ENCODE measurements at regions of chr12 and their contacts with region 1.

Region 1: DNA sequence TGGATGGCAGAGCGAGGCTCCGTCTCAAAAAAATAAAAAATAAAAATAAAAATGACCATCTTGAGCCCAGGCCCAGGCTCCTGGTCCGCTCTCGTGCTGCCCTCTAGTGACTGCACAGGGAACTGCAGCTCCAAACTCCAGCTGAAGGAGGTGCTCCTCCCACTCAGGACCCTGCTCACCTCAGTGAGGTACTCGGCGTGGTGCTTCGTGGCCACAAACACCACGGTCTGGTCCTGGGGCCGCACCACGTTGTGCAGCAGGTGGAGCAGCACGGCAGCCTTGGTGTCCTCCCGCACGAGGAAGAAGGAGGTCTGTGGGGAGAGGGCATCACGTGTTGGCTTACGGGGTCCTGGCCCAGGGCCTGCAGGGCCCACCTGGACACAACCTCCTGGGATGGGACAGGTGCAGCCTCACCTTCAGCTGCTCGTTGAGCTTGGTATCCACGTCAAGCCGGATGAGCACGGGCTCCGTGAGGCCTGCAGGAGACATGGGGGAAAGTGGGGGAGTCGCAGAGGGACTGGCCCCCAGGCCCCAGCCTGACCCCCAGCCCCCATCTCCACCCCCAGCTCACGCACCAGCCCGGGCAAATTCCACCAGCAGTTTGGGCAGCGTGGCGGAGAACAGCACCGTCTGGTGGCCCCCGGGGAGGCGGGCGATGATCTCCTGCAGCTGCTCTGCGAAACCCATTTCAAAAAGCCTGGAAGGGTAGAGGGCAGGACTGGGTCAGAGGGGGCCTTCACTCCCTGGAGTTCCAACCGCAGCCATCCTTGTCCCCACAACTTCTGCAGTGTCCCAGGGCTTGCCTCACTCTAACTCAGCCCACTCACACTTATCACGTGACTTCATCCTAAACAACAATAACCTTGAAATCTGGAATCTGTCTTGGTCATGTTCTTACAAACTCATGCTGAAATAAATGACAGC is 10.6 kb downstream of the DDX54 start:
- DNase-seq: peak; percentile 56 to 79 (median 69)
- H3K4me3 ChIP-seq: no peak overlapping the region
- H3K27ac ChIP-seq: no peak overlapping the region
- H3K4me1 ChIP-seq: no peaks in the 10 kb centered on the region
- H3K27me3 ChIP-seq: no peaks in the 10 kb centered on the region

Region 2: GRCh38 chr12:112992541-112993398 is 182.0 kb before region 1 on chr12:
- CTCF ChIA-PET with region 1: interaction called, 21 read pairs
- POLR2A ChIA-PET with region 1: no interaction called
- DNase-seq: peak; percentile 62 to 86 (median 79)
- H3K4me3 ChIP-seq: no peak overlapping the region
- H3K27ac ChIP-seq: no peak overlapping the region
- H3K4me1 ChIP-seq: peaks cover 0 to 11% (median 4%) of the 10 kb centered on the region in 4 experiments
- H3K27me3 ChIP-seq: no peaks in the 10 kb centered on the region

Region 3: GRCh38 chr12:113098446-113098896 is 76.3 kb before region 1 on chr12:
- CTCF ChIA-PET with region 1: interaction called, 18 read pairs
- POLR2A ChIA-PET with region 1: no interaction called
- DNase-seq: peak; percentile 72 to 79 (median 79)
- H3K4me3 ChIP-seq: no peak overlapping the region
- H3K27ac ChIP-seq: no peak overlapping the region
- H3K4me1 ChIP-seq: peaks cover 0 to 6% (median under 1%) of the 10 kb centered on the region in 4 experiments
- H3K27me3 ChIP-seq: peaks cover 0 to under 1% (median 0%) of the 10 kb centered on the region in 5 experiments

Region 4: DNA sequence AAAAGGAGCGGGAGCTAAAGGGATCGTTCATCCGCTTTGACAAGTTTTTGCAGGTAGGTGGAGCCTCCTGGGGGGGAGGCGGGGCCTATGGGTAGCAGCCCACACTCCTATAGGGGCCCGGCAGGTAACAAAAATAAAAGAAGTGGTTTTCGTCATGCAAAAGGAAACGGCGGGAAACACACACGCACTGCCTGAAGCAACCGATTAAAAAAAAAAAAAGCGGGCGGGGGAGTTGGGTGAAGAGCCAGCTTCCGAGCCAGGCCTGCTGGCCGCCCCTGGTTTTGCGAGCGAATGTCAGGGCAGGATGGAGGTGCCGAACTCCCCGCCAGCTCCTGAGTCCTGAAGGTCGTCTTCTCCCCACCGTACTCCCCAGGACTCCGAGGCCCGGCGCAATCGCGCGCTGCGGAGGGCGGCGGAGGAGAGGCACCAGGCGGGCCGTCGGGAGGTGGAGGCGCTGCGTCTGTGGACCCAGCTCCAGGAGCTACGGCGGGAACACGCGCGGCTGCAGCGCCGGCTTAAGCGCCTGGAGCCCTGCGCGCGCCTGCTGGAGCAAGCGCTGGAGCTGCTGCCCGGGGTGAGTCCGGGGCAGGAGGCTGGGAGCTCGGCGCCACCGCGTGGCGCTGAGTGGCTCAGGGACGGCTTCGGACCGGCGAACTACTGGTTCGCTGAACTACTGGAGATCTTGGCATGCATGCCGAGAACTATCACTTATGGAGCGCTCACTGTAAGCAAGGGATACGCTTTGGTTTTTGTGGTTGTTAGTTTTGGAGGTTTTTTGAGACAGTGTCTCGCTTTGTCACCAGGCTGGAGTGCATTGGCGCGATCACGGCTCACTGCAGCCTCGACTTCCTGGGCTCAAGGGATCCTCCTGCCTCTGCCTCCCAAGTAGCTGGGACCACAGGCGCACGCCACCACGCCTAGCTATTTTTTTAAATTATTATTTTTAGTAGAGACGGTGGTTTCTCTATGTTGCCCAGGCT is 21.6 kb before region 1 on chr12:
- CTCF ChIA-PET with region 1: interaction called, 97 read pairs
- POLR2A ChIA-PET with region 1: no interaction called
- DNase-seq: peak; percentile 74 to 88 (median 87)
- H3K4me3 ChIP-seq: peak overlapping the region; percentile 23 to 67 (median 61)
- H3K27ac ChIP-seq: no peak overlapping the region
- H3K4me1 ChIP-seq: peaks cover 0 to 51% (median 45%) of the 10 kb centered on the region in 4 experiments
- H3K27me3 ChIP-seq: peaks cover 0 to 32% (median 12%) of the 10 kb centered on the region in 5 experiments

Region 5: GRCh38 chr12:113184900-113185773 is 10.4 kb after region 1 on chr12 and contains the starts of genes DDX54 and RITA1:
- CTCF ChIA-PET with region 1: interaction called, 17 read pairs
- POLR2A ChIA-PET with region 1: no interaction called
- DNase-seq: peak; percentile 90 to 94 (median 94)
- H3K4me3 ChIP-seq: peak within 1 kb of the TSS; percentile 74 to 90 (median 85)
- H3K27ac ChIP-seq: peak within 1 kb of the TSS; percentile 96 to 97
- H3K4me1 ChIP-seq: peaks cover 0 to 26% (median 22%) of the 10 kb centered on the region in 4 experiments
- H3K27me3 ChIP-seq: no peaks in the 10 kb centered on the region

Region 6: DNA sequence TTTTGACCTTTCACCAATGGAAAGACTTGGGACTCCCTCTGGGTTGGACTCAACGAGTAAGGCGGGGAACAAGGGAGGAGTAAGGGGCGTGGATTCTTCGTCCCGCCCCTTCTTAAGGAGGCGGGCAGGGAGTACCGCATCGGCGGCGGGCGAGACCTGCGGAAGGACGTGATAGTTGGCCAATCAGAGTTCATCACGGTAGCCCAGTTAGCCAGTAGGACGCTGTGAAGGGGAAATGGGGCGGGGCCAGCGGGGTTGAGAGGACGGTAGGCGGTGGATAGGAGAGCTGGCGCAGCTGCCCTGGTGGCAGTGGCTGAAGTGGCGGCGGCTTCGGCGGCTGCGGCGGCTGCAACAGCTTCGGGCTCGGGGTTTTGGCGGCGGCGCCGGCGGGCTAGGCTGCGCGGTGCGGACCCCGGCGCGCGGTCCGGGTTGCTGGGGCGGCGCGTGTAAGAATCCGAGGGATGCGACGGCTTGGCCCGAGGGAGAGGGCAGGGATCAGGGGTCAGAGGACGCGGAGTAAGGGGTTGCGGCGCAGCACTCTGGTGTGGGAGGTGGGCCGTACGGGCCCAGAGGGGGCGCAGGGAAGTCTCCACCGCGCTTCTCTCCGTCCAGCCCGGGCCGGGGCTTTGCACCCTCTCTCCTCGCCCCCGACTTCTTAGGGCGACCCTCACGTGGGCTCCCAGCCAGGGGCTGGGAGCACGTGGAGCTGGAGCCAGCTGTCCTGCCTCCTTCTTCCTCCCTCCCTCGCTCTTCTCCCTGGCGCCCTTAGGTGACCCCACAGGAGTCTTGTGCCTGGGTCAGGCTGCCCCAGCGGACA is 46.7 kb after region 1 on chr12 and contains the start of gene TPCN1:
- CTCF ChIA-PET with region 1: no interaction called
- POLR2A ChIA-PET with region 1: no interaction called
- DNase-seq: peak; percentile 100
- H3K4me3 ChIP-seq: peak within 1 kb of the TSS; percentile 57 to 95 (median 74)
- H3K27ac ChIP-seq: peak within 1 kb of the TSS in 1 of 2 experiments; percentile 75
- H3K4me1 ChIP-seq: peaks cover 4 to 29% (median 27%) of the 10 kb centered on the region in 4 experiments
- H3K27me3 ChIP-seq: no peaks in the 10 kb centered on the region